Breast epithelium (tissue), 4 donors: ENCODE measurements at regions of chr20 and their contacts with region 1.

Region 1: DNA sequence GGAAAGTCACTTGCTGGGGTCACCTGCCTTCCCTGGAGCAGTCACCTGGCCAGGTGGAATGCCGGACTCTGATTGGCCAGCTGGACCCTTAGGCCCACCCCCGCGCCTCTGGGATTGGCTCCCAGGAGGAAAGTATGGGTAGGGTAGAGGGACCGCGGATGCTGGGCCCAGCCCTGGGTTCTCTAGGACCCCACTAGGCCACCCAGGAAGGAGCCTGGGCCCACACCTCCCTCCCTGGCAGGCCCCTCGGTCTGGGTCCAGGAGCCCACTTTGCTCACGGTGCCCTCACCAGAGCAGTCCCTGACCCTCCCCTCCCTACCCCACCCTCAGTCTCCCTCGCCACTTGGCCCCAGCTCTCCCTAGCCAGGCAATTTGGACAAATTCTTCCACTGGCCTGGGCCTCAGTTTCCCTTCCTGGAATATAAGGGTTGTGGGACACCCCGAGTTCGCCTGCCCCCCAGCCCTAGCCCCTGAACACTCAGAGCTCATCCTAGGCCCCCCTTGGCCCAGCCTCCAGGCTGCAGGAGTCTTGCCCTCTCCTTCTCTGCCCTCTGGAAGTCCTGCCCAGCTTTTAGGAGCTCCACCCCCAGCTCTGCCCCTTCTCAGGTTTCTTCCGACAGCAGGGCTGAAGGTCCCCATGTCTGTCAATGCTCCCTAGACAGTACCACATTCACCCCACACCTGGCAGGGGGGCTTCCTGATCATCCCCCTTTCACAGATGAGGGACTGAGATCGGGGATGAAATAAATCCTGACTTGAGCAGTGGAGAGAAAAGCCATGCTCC is 299.6 kb downstream of the TAF4 start:
- DNase-seq: peak in 1 of 2 donors; percentile 25
- H3K4me3 ChIP-seq: no peak overlapping the region
- H3K27ac ChIP-seq: no peak overlapping the region
- H3K4me1 ChIP-seq: no peaks in the 10 kb centered on the region
- H3K27me3 ChIP-seq: peaks cover 0 to 22% of the 10 kb centered on the region in 2 donors
- CTCF ChIP-seq: no peak
- POLR2A ChIP-seq: no peak

Region 2: DNA sequence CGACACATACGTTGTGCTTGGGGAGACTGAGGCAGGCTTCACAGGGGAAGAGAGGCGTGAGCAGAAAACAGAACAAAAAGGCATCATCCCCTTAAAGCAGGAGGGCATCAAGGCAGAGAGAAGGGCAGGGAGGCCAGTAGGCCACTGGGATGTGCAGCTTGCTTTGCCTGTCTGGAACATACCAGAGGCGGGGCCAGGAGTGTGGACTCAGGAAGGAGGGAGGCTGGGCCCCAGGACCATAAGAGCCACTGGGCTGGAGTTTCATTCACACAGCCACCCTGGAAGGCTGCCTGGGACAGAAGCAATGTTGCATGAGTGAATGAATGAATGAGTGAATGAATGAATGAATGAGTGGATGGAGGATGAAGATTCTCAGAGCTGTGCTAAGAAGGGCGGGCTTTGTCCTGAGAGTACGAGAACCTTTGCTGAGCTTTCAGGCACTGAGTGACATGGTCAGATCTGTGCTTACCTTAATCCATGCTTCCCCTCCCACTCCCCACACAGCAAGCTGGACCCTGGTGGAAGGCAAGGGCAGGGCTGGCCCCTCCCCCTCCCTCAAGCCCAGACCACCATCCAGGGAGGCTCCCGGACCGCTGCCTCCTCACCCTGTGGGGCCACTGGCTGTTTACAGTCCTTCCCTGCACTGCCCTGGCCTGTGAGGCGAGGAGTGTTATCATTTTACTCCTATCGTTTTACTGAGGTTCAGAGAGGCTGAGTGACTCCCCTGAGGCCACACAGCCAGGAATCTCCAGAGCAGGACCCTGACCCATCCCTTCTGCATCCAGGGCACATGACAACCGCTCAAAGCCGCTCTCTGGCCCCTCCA is 29.7 kb after region 1 on chr20:
- intact Hi-C with region 1: loop called (anchors 1 kb)
- DNase-seq: no peak
- H3K4me3 ChIP-seq: no peak overlapping the region
- H3K27ac ChIP-seq: no peak overlapping the region
- H3K4me1 ChIP-seq: no peaks in the 10 kb centered on the region
- H3K27me3 ChIP-seq: peaks cover 3 to 19% of the 10 kb centered on the region in 2 donors
- CTCF ChIP-seq: no peak
- POLR2A ChIP-seq: no peak

Region 3: GRCh38 chr20:61896058-61896961 is 130.2 kb after region 1 on chr20:
- intact Hi-C with region 1: no loop called
- DNase-seq: no peak
- H3K4me3 ChIP-seq: no peak overlapping the region
- H3K27ac ChIP-seq: no peak overlapping the region
- H3K4me1 ChIP-seq: no peaks in the 10 kb centered on the region
- H3K27me3 ChIP-seq: peaks cover 0 to 32% of the 10 kb centered on the region in 2 donors
- CTCF ChIP-seq: peak in 2 of 3 donors; percentile 39 to 41
- POLR2A ChIP-seq: no peak

Region 4: DNA sequence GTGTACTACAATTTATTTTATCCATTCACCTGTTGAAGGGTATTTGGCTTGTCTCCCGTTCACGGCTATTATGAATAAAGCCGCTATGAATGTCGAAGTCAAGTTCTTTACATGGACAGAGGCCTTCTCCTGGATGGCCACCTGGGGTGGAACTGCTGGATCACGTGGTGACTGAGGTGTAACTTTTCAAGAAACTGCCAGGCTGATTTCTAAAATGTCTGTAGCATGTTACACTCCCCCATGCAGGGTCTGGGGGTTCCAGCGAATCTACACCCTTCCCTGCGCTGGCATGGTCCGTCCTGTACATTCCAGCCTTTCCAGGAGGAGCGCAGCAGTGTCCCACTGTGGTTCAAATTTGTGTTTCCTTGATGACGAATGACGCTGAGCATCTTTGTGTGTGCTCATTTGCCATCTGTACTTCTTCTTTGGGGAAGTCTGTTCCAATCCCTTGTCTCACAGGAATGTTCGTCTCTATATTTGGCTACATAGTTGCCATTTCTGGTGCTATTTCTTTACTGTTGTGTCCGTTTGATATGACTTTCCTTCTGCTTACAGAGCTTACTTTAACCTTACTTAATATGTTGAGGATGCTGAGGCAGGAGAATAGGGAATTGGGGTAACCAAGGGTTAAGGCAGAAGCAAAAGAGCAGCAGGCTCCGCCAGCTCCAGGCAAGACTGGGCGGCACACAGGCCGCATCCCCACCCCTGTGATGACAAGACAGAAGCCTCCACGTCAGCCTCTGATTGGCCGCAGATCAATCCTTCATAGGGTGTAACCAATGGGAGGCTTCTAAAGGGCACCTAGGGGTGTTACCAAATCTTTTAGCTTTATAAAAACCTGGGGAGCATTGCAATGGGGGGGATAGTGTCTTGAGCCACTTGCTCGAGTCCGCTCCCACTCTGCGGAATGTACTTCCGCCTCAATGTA is 193.0 kb after region 1 on chr20:
- intact Hi-C with region 1: no loop called
- DNase-seq: no peak
- H3K4me3 ChIP-seq: no peak overlapping the region
- H3K27ac ChIP-seq: no peak overlapping the region
- H3K4me1 ChIP-seq: no peaks in the 10 kb centered on the region
- H3K27me3 ChIP-seq: peaks cover 0 to 7% of the 10 kb centered on the region in 2 donors
- CTCF ChIP-seq: no peak
- POLR2A ChIP-seq: no peak

Region 5: GRCh38 chr20:61998343-61999121 is 232.5 kb after region 1 on chr20:
- intact Hi-C with region 1: no loop called
- DNase-seq: no peak
- H3K4me3 ChIP-seq: no peak overlapping the region
- H3K27ac ChIP-seq: no peak overlapping the region
- H3K4me1 ChIP-seq: no peaks in the 10 kb centered on the region
- H3K27me3 ChIP-seq: no peaks in the 10 kb centered on the region
- CTCF ChIP-seq: no peak
- POLR2A ChIP-seq: no peak